Endothelial cell of umbilical vein (primary cell): ENCODE measurements at regions of chr1 and their contacts with region 1.

Region 1: DNA sequence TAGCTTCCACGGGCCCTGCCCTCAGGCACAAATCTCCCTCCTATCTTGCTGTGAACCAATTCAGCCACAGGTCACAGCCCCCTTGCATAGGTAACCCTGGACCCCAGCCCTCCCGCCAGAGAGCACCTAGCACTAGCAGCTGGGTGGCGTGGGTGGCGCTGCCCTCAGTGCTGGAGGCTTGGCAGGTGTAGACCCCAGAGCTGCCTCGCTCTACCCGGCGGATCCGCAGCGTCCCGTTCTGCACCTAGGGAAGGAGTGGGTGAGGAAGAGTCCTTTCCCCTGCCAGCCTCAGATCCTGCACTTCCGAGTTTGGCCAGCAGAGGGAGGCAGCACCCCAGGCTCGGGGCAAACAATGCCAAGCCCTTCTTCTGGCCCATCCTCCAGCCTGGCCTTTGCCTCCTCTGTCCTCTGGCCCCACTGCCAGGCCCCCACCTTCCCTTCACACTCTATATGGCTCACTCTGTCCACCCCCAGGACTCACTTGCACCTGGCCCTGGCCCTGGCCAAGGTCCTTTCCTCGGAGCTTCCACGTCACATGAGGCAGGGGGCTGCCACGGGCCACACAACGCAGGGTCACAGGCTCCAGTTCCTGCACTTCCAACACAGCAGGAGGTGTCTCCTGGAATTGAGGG is 9.0 kb downstream of the IGSF9 start:
- DNase-seq: peak; percentile 47
- H3K4me3 ChIP-seq: no peak overlapping the region
- H3K27ac ChIP-seq: no peak overlapping the region
- H3K4me1 ChIP-seq: no peaks in the 10 kb centered on the region
- H3K27me3 ChIP-seq: peaks cover 0 to 14% of the 10 kb centered on the region in 2 experiments
- CTCF ChIP-seq: peak; percentile 86 to 98
- POLR2A ChIP-seq: no peak

Region 2: GRCh38 chr1:159979257-159979656 is 42.9 kb after region 1 on chr1:
- CTCF ChIA-PET with region 1: no interaction called
- POLR2A ChIA-PET with region 1: no interaction called
- dilution Hi-C with region 1: no loop called
- intact Hi-C with region 1: no loop called
- DNase-seq: no peak
- H3K4me3 ChIP-seq: no peak overlapping the region
- H3K27ac ChIP-seq: no peak overlapping the region
- H3K4me1 ChIP-seq: no peaks in the 10 kb centered on the region
- H3K27me3 ChIP-seq: peaks cover 12 to 13% of the 10 kb centered on the region in 2 experiments
- CTCF ChIP-seq: no peak
- POLR2A ChIP-seq: no peak

Region 3: DNA sequence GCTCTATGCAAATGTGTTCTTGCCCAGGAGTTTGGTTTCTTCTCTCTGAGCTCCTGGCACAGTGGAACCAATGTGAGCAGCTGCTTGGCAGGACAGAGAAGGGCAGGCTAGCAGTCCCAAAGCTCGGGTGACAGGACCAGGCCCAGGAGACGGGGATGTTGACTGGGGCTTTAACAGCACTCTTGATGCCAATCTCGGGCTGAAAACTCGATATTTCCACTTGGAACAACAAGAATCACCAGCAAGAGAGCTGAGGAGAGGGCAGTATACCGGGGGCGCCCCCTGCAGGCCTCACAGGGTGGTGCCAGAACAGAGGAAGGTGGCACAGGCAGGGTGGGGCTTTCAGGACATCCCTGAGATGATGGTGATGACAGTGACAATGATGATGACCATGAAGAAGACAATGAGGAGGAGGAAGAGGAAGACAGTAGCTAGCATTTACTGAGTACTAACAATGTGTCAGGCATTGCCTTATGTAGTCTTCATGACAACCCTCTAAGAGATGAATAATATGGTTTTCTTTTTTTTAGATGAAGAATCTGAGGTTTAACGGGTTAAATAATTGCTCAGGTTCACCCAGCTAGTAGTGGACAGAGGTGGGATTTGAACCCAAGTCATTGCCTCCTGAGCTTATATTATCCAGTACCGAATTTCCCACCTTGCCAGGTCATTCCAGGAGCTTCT is 142.3 kb after region 1 on chr1:
- CTCF ChIA-PET with region 1: no interaction called
- POLR2A ChIA-PET with region 1: no interaction called
- dilution Hi-C with region 1: no loop called
- intact Hi-C with region 1: loop called (anchors 1 kb)
- DNase-seq: peak; percentile 26
- H3K4me3 ChIP-seq: no peak overlapping the region
- H3K27ac ChIP-seq: no peak overlapping the region
- H3K4me1 ChIP-seq: no peaks in the 10 kb centered on the region
- H3K27me3 ChIP-seq: peaks cover 44 to 56% of the 10 kb centered on the region in 2 experiments
- CTCF ChIP-seq: peak; percentile 80 to 87
- POLR2A ChIP-seq: no peak

Region 4: GRCh38 chr1:160085686-160086455 is 149.5 kb after region 1 on chr1:
- CTCF ChIA-PET with region 1: no interaction called
- POLR2A ChIA-PET with region 1: no interaction called
- dilution Hi-C with region 1: no loop called
- intact Hi-C with region 1: loop called (anchors 1 kb)
- DNase-seq: peak; percentile 65
- H3K4me3 ChIP-seq: no peak overlapping the region
- H3K27ac ChIP-seq: no peak overlapping the region
- H3K4me1 ChIP-seq: no peaks in the 10 kb centered on the region
- H3K27me3 ChIP-seq: peaks cover 35 to 37% of the 10 kb centered on the region in 2 experiments
- CTCF ChIP-seq: peak; percentile 82 to 99
- POLR2A ChIP-seq: no peak

Region 5: GRCh38 chr1:160226623-160227022 is 290.2 kb after region 1 on chr1:
- CTCF ChIA-PET with region 1: no interaction called
- POLR2A ChIA-PET with region 1: no interaction called
- dilution Hi-C with region 1: no loop called
- intact Hi-C with region 1: no loop called
- DNase-seq: no peak
- H3K4me3 ChIP-seq: no peak overlapping the region
- H3K27ac ChIP-seq: no peak overlapping the region
- H3K4me1 ChIP-seq: no peaks in the 10 kb centered on the region
- H3K27me3 ChIP-seq: no peaks in the 10 kb centered on the region
- CTCF ChIP-seq: no peak
- POLR2A ChIP-seq: no peak